ENCODE measurements at regions of chr5 and their contacts with region 1.

Region 1: DNA sequence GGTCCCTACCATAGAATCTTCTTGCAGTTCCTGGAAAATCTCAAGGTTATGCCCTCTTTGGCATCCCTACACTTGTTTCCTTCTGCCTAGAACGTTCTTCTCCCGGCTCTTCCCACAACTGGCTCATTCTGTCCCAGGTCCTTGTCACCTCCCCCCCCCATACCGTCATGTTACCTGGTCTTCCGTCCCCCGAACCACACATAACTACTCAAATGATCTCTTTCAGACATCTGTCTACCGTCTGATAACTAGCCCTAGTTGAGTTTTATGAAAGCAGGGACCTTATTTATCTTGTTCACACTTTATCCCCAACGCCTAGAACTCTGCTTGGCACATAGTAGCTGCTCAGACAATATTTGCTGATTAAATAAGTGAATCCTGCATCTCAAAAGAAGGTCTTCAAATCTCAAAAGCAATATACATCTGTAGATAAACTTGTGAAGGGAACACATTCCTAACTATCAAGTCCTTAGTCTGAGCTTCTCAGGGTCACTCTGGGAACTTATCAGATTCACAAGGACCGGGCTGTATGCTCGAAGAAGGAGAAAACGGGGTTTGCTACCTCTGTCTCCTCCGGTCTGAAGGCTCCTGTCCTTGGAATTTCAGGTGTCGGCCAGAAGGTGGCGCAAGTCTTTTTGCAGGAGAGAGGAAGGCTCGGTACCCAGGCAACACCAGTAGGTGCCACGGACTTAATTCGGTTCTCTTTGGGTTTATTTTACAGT is 30.0 kb downstream of the LCP2 start:
- DNase-seq: peak; percentile 48
- ATAC-seq: peak; percentile 92
- H3K4me3 ChIP-seq: no peak overlapping the region
- H3K27ac ChIP-seq: no peak overlapping the region
- H3K4me1 ChIP-seq: peaks cover 6% of the 10 kb centered on the region; the same call in 1 of the 2 replicates
- H3K27me3 ChIP-seq: peaks cover 22% of the 10 kb centered on the region
- CTCF ChIP-seq: peak; percentile 92

Region 2: GRCh38 chr5:170100066-170100943 is 167.3 kb before region 1 on chr5:
- CTCF ChIA-PET with region 1: interaction called, 14 read pairs
- POLR2A ChIA-PET with region 1: no interaction called
- in situ Hi-C with region 1: no loop called
- intact Hi-C with region 1: no loop called
- DNase-seq: peak; percentile 36
- ATAC-seq: peak; percentile 88
- H3K4me3 ChIP-seq: no peak overlapping the region
- H3K27ac ChIP-seq: peak overlapping the region; percentile 91
- H3K4me1 ChIP-seq: peaks cover 33% of the 10 kb centered on the region
- H3K27me3 ChIP-seq: no peaks in the 10 kb centered on the region
- CTCF ChIP-seq: peak; percentile 79

Region 3: DNA sequence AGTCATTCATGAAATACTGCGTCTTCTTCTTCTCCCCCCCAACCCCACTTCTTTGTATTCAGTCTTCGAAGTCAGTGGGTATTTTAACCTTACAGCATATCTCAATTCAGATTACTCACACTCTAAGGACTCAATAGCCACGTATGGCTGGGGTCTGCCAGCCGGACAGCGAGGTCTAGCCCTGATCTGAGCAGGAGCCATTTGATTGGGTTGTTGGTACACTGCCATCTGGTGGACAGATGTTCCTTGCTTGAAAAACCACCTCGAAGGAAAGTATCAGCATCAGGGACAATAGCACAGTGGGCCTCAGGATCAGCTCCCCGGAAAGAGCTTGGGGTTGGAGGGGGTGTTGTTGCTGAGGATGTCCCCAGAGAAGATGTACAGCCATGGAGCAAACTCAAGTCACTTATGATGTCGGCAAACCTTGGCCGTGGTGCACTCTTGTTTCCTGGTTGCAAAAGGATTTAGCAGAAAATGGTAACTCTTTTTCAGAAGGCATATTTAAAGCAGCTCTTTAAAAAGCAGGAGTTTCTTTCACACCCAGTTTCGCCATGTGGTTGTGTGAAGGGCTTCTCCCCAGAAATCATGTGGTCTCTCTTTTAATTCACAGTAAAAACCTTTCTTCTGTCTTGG is 153.3 kb after region 1 on chr5:
- CTCF ChIA-PET with region 1: interaction called, 3 read pairs
- POLR2A ChIA-PET with region 1: no interaction called
- in situ Hi-C with region 1: no loop called
- intact Hi-C with region 1: loop called (anchors 2 kb)
- DNase-seq: peak; percentile 25
- ATAC-seq: peak; percentile 88; the same call in 1 of the 2 replicates
- H3K4me3 ChIP-seq: no peak overlapping the region
- H3K27ac ChIP-seq: no peak overlapping the region
- H3K4me1 ChIP-seq: no peaks in the 10 kb centered on the region
- H3K27me3 ChIP-seq: no peaks in the 10 kb centered on the region; the same call in none of the 2 replicates
- CTCF ChIP-seq: peak; percentile 81

Region 4: GRCh38 chr5:170623576-170624181 is 356.1 kb after region 1 on chr5:
- CTCF ChIA-PET with region 1: no interaction called
- POLR2A ChIA-PET with region 1: no interaction called
- in situ Hi-C with region 1: no loop called
- intact Hi-C with region 1: loop called (anchors 5 kb)
- DNase-seq: no peak
- ATAC-seq: peak; percentile 84
- H3K4me3 ChIP-seq: no peak overlapping the region
- H3K27ac ChIP-seq: no peak overlapping the region
- H3K4me1 ChIP-seq: no peaks in the 10 kb centered on the region
- H3K27me3 ChIP-seq: no peaks in the 10 kb centered on the region
- CTCF ChIP-seq: peak; percentile 83

Region 5: DNA sequence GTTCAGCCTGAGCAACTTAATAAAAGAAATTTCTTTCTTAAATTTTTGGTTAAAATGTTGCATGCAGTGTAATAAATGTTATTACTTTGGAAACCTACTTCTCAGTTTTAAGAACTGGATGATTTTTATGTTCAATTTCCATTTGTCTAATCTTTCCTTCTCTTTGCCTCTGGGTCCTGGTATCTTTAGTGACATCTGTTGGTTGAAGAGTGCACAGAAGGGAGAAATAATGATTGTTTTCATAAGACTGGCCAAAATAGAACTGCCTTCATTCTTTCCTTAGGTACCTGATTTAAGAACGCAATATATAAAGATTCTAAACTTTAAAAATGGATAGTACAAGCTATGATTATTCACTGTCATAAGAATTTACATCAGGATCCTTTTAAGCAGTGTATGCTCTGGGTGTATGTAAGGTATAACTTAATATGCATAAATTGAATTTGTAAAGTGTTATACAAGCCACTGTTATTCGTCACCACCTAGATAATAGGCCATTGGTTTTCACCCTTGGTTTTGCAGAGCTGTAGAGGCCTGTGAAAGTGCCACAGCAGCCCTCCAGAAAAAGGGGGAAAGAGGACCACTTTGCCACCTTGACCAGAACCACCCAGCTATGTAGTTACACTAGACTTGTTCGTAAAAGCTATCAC is 958.6 kb after region 1 on chr5:
- CTCF ChIA-PET with region 1: no interaction called
- POLR2A ChIA-PET with region 1: no interaction called
- in situ Hi-C with region 1: no loop called
- intact Hi-C with region 1: no loop called
- DNase-seq: no peak
- ATAC-seq: no peak
- H3K4me3 ChIP-seq: no peak overlapping the region
- H3K27ac ChIP-seq: no peak overlapping the region
- H3K4me1 ChIP-seq: no peaks in the 10 kb centered on the region
- H3K27me3 ChIP-seq: peaks cover 8% of the 10 kb centered on the region; the same call in 1 of the 2 replicates
- CTCF ChIP-seq: peak; percentile 36; the same call in 1 of the 2 replicates